ENCODE measurements at regions of chr14 and their contacts with region 1.

Region 1: DNA sequence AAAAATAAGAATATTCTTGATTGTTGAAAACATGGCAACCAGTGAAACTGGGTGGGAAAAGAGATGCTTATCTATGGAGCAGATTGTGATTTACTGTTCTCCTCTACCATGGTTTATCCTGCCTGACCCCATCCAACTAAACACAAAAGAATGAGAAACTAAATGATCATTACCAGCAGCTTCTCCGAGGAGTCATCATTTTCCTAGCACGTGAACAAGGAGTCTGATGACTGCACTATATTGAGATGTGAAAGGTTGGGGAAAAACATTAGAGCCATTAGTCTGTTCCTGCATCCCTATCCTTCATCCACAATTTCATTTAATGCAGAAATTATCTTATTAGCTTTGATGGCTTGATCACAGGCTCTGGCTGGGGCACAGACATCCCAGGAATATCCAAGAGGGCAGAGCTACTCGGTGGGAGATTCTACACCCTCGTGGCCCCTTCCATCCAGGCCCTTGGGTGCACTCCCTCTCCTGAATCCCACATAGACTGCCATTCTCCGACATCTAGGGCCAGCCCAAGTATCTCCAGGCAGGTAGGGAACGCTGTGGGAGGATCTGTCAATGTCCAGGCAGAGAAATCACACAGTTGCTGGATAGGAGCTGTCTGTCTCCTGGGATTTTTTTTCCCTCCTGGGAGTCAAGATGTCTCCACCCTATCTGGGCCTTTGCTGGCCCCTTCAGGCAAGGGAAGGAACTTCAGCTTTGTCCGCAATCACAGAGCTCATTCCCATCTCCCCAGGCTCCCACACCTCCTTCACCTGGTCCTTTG is 43.3 kb upstream of the DHRS4 start:
- DNase-seq: no peak
- H3K4me3 Mint-ChIP-seq: no peak overlapping the region
- H3K27ac Mint-ChIP-seq: no peak overlapping the region
- H3K4me1 Mint-ChIP-seq: peaks cover 7% of the 10 kb centered on the region
- H3K27me3 Mint-ChIP-seq: no peaks in the 10 kb centered on the region

Region 2: DNA sequence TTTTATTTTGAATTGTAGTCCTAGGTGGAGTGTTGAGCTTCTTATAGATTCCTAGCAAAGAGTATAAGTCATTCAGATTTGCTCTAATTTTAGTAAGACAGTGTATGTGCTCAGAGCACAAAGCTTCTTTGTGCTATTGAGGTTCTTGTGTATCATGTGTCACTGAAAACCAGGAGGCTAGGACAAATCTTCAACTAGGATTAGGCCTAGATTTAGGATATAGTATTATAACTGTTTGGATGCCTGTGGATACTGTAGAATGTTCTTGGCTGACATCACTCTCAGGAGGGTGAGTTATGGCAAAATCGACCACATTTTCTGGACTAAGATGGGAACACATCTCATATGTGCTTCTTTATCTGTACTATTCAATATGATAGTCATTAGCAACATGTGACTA is 187.6 kb before region 1 on chr14:
- intact Hi-C with region 1: loop called (anchors 1 kb)
- DNase-seq: no peak
- H3K4me3 Mint-ChIP-seq: no peak overlapping the region
- H3K27ac Mint-ChIP-seq: no peak overlapping the region
- H3K4me1 Mint-ChIP-seq: no peaks in the 10 kb centered on the region
- H3K27me3 Mint-ChIP-seq: no peaks in the 10 kb centered on the region

Region 3: GRCh38 chr14:23861666-23862065 is 48.6 kb before region 1 on chr14:
- intact Hi-C with region 1: no loop called
- DNase-seq: no peak
- H3K4me3 Mint-ChIP-seq: no peak overlapping the region
- H3K27ac Mint-ChIP-seq: no peak overlapping the region
- H3K4me1 Mint-ChIP-seq: no peaks in the 10 kb centered on the region
- H3K27me3 Mint-ChIP-seq: peaks cover 2% of the 10 kb centered on the region

Measured in activated T-helper 2 cell treated with anti-CD3 and anti-CD28 coated beads, Interferon-gamma antibody, Interleukin-2, Interleukin-4, amounts not matched to agents 10 μg/mL and 5 μg/mL and 100 μg/mL, durations not matched to agents 14 hours and 24 hours and 36 hours (primary cell).